ENCODE measurements at regions of chr2 and their contacts with region 1.

Region 1: DNA sequence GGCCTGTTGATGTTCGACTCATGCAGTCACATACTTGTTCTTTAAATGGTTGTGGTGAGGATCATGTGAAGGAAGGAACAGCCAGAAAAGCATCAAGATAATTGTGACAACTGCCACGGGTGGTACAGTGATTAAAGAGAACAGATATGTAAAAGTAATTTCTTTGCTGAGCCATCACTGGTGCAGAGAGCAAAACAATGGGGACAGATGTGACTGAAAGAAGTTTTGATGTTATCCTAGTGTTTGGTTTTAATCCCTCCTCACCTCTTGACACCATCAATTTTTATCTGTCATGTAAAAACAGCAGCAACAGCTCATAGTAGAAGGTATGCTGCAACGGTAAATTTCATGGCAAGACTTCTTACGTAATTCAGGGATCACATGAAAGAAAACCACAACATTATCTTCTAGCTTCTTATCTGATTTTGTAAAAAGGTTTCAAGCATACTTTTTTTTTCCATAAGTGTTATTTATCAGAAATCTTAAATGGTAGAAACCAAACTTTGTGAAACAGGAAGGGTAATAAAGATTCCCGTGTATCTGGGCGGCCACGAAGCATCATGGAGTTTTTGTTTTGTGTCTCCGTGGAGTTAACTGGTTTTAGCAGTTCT is 65.2 kb downstream of the PLCL1 start:
- DNase-seq: no peak
- H3K4me3 Mint-ChIP-seq: peak overlapping the region; percentile 61
- H3K27ac Mint-ChIP-seq: peak overlapping the region; percentile 70
- H3K4me1 Mint-ChIP-seq: peaks cover 51% of the 10 kb centered on the region
- H3K27me3 Mint-ChIP-seq: no peaks in the 10 kb centered on the region

Region 2: GRCh38 chr2:197179744-197180498 is 689.7 kb before region 1 on chr2:
- intact Hi-C with region 1: no loop called
- DNase-seq: no peak
- H3K4me3 Mint-ChIP-seq: no peak overlapping the region
- H3K27ac Mint-ChIP-seq: no peak overlapping the region
- H3K4me1 Mint-ChIP-seq: peaks cover 42% of the 10 kb centered on the region
- H3K27me3 Mint-ChIP-seq: no peaks in the 10 kb centered on the region

Region 3: GRCh38 chr2:197838036-197838435 is 31.6 kb before region 1 on chr2:
- intact Hi-C with region 1: loop called (anchors 1 kb)
- DNase-seq: peak; percentile 11
- H3K4me3 Mint-ChIP-seq: peak overlapping the region; percentile 54
- H3K27ac Mint-ChIP-seq: peak overlapping the region; percentile 76
- H3K4me1 Mint-ChIP-seq: peaks cover 42% of the 10 kb centered on the region
- H3K27me3 Mint-ChIP-seq: peaks cover 3% of the 10 kb centered on the region

Region 4: DNA sequence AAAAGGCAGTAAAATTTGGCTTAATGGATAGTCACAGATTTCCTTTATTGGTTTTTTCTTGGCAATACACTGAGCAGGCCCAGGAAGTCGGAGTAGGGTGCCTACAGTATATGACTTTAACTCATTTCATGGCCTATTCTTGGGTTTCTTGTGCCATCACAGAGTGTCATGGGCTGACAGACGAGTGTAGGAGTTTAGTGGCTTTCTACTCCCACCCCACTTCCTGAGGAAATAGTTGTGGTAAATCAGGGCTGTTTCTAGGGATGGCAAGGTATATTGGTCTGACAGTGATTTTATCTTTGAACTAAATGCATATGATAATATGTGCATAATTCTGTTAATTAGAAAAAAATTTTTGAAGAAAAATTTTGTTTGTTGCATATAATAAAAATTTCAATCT is 34.8 kb after region 1 on chr2:
- intact Hi-C with region 1: loop called (anchors 5 kb)
- DNase-seq: peak; percentile 6
- H3K4me3 Mint-ChIP-seq: no peak overlapping the region
- H3K27ac Mint-ChIP-seq: no peak overlapping the region
- H3K4me1 Mint-ChIP-seq: peaks cover 5% of the 10 kb centered on the region
- H3K27me3 Mint-ChIP-seq: peaks cover 35% of the 10 kb centered on the region

Region 5: DNA sequence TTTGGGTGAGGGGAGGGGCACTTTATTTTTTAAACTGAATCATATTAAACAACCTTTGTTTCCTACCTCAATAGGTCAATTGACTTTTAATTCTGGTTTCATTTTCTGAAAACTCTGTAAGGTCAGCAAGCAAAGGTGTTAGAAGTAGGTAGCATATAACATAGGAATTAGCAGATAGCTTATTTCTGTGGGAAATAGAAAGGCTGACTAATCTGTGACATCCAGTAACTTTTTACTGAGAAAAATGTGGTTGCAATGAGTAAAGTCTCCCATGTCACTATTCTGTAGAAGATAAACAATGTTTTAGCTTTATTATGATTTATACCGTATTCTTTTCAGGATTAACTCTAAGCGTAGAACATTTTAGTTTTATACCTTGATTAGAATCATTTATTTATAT is 175.2 kb after region 1 on chr2:
- intact Hi-C with region 1: loop called (anchors 1 kb)
- DNase-seq: no peak
- H3K4me3 Mint-ChIP-seq: peak overlapping the region; percentile 19
- H3K27ac Mint-ChIP-seq: peak overlapping the region; percentile 76
- H3K4me1 Mint-ChIP-seq: peaks cover 14% of the 10 kb centered on the region
- H3K27me3 Mint-ChIP-seq: no peaks in the 10 kb centered on the region